Mammary epithelial cell (primary cell): ENCODE measurements at regions of chr7 and their contacts with region 1.

Region 1: DNA sequence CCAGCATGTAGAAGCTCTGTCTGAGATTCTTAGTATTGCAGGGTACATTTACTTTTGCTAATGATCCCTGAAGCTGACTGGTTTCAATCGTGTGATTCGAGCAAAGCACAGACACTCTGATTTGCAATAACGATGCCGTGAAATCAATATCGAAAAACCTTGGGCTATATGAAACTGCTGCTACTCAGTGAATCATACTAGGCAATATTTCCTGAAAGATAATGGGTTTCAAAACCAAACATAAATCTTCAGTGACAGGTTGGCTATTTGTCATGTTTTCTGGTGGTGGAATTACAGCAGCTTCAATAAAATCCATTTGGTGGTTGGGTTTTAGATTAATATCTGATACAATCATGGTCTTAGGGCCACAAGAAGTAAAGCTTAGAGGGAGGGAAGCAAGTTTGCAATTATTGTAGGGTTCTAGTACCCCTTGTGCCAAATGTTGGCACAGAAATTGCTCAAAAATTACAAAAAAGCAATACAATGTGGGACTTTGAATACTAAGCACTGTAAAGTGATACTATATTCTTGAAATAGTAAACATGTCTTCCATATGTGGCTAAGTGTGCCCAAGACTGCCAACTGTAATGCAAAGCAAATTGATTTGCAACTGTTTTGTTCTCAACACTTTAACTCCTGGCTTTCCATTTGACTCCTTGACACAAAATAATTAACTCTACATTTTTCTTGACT is 112.4 kb upstream of the JAZF1 start:
- DNase-seq: no peak
- H3K4me3 ChIP-seq: no peak overlapping the region
- H3K27ac ChIP-seq: no peak overlapping the region
- H3K4me1 ChIP-seq: no peaks in the 10 kb centered on the region
- H3K27me3 ChIP-seq: peaks cover 4% of the 10 kb centered on the region
- CTCF ChIP-seq: no peak

Region 2: DNA sequence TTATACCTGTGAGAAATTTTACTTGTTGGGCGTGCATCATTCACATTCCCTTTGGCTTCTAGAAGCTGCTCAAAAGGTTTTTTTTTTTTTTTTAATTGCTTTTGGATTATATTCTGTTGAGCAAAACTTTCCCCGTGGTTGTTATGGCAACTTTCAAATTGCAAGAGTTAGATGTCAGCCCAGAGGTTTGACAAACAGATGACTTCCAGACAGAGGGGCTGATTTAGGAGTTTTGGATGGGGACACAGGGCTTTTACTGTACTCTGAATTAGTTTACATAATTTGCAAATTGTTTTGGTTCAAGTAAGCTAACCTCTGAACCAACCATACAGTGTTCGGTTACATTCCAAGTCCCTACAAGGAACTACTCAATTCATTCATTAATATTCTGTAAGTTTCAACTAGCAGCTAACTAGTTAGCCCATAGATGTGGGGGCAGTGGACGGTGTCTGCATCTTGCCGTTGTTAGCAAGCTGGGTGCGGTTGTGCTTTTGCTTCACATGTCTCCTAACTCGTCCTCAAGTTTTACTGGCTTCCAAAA is 46.0 kb before region 1 on chr7:
- CTCF ChIA-PET with region 1: interaction called, 11 read pairs
- dilution Hi-C with region 1: no loop called
- in situ Hi-C with region 1: no loop called
- intact Hi-C with region 1: no loop called
- DNase-seq: no peak
- H3K4me3 ChIP-seq: no peak overlapping the region
- H3K27ac ChIP-seq: no peak overlapping the region
- H3K4me1 ChIP-seq: no peaks in the 10 kb centered on the region
- H3K27me3 ChIP-seq: no peaks in the 10 kb centered on the region
- CTCF ChIP-seq: no peak

Region 3: DNA sequence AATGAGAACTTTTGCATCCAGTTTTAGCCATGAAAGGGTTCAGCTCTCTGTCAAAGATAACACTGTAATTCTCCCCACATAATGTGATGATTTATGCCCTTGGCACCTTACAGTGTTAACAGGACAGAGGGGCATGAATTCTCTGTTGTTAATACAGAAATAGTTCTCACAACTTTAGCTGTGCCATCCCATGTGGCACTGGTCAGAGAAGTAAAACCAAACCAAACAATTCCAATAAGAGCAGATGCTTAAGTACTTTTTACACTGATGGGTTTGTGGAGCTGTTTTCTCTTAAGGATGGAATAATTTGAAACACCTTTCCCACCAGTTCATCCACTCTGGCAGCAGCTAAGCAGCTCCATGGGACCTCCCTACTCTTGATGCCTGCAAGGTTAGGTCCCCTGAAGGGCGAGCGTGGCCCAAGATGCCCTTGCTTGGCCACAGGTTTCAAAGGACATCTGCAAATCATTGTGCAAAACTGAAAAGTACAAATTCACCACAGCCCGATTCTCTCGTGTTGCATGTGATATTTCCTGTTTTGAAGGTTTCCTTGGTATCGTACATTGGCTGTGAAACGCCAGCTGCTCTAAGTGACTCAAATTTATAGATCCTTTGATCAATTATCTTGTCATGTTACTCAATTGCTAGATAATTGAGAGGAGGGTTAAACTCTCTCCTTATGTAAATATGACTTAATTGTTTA is 36.8 kb after region 1 on chr7:
- CTCF ChIA-PET with region 1: no interaction called
- dilution Hi-C with region 1: loop called (anchors 5 kb)
- in situ Hi-C with region 1: no loop called
- intact Hi-C with region 1: no loop called
- DNase-seq: no peak
- H3K4me3 ChIP-seq: no peak overlapping the region
- H3K27ac ChIP-seq: no peak overlapping the region
- H3K4me1 ChIP-seq: no peaks in the 10 kb centered on the region
- H3K27me3 ChIP-seq: no peaks in the 10 kb centered on the region
- CTCF ChIP-seq: no peak

Region 4: DNA sequence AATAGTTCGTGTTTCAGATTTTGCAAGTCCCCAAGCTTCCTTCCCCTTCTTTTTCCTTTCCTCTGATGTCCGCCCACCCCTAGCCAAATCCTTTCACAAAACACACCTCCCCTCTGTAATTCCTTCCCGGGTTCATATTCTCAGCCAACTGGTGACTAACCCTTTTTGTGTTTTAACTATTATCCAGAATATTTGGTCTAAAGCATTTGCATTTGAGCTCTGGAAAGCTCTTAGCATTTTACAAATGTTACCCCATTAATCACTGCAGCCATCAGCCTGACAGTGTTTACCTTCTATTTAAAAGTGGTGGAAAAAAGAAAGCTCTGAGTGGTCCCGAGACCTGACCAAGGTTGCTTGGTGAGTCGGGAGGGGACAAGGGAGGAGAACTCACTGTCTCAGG is 258.4 kb after region 1 on chr7:
- CTCF ChIA-PET with region 1: no interaction called
- dilution Hi-C with region 1: no loop called
- in situ Hi-C with region 1: no loop called
- intact Hi-C with region 1: no loop called
- DNase-seq: no peak
- H3K4me3 ChIP-seq: no peak overlapping the region
- H3K27ac ChIP-seq: no peak overlapping the region
- H3K4me1 ChIP-seq: peaks cover 3% of the 10 kb centered on the region
- H3K27me3 ChIP-seq: peaks cover 7% of the 10 kb centered on the region
- CTCF ChIP-seq: no peak

Region 5: DNA sequence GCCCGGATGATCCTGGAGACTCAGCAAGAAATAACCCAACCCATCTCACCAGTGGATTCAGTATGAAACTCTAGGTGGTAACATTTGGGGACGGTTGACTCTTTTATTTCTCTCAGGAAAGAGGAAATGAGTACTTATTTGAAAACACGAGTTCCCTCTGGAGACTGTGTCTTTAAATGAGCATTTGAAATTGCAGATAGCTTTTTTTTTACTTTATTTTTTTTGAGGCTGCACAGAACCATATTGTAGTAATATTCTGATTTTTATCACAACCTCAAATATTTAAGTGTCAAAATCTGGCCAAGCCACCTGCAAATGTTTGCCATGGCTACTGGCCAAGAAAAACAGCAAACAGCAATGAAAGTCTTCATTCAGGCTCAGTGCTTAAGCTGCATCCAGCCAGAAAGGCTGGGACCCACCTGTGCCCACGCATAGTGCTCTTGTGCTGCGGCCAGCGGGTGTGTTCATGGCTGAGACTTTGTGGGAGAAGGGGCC is 280.1 kb after region 1 on chr7:
- CTCF ChIA-PET with region 1: no interaction called
- dilution Hi-C with region 1: no loop called
- in situ Hi-C with region 1: no loop called
- intact Hi-C with region 1: no loop called
- DNase-seq: peak; percentile 82
- H3K4me3 ChIP-seq: no peak overlapping the region
- H3K27ac ChIP-seq: no peak overlapping the region
- H3K4me1 ChIP-seq: peaks cover 32% of the 10 kb centered on the region
- H3K27me3 ChIP-seq: peaks cover 6% of the 10 kb centered on the region
- CTCF ChIP-seq: no peak